AG04449 (cell line): ENCODE measurements at regions of chr5 and their contacts with region 1.

Region 1: GRCh38 chr5:177113566-177114424 is 19.8 kb upstream of the NSD1 start:
- DNase-seq: no peak
- H3K4me3 ChIP-seq: no peak overlapping the region
- CTCF ChIP-seq: peak; percentile 97

Region 2: DNA sequence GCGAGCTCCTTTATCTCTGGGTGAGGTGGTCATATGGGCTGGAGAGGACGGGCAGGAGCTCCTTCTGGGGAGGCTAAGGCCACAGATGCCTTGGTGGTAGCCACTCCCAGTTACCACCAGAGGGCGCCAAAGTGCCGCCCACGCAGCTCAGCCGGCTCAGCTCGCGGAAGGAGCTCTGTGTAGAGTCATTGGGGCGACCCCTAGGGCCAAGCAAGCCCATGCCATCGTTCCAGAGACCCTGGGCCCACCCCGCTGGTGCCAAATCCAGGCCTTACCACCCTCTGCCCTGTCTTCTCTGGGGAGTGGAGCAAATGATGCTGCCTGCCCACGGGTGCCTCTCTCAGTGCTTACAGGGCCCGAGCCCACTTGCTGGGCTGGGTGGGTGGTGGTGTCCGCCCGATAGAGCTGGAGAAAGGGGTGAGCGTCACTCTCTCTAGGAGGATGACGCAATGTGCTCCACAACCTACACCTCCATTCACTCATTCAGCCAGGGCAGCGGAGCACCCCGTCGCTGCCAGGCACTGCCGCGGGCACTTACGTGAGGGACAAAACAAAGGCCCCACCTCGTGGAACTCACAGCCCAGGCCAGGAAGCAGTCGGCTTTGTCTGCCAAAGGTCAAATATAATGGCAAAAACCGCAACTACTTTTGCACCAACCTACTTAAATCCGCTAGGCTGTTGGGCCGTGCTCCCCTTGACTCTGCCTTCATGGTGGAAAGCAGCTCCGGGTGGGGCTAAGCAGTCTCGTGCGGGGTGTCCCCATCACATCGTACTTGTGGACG is 452.7 kb before region 1 on chr5:
- CTCF ChIA-PET with region 1: interaction called, 207 read pairs
- POLR2A ChIA-PET with region 1: no interaction called
- DNase-seq: no peak
- H3K4me3 ChIP-seq: no peak overlapping the region
- CTCF ChIP-seq: peak; percentile 97

Region 3: GRCh38 chr5:176823869-176824412 is 289.9 kb before region 1 on chr5:
- CTCF ChIA-PET with region 1: no interaction called
- POLR2A ChIA-PET with region 1: no interaction called
- DNase-seq: no peak
- H3K4me3 ChIP-seq: no peak overlapping the region
- CTCF ChIP-seq: no peak

Region 4: GRCh38 chr5:177094224-177095087 is 19.3 kb before region 1 on chr5:
- CTCF ChIA-PET with region 1: interaction called, 102 read pairs
- POLR2A ChIA-PET with region 1: no interaction called
- DNase-seq: no peak
- H3K4me3 ChIP-seq: no peak overlapping the region
- CTCF ChIP-seq: no peak

Region 5: DNA sequence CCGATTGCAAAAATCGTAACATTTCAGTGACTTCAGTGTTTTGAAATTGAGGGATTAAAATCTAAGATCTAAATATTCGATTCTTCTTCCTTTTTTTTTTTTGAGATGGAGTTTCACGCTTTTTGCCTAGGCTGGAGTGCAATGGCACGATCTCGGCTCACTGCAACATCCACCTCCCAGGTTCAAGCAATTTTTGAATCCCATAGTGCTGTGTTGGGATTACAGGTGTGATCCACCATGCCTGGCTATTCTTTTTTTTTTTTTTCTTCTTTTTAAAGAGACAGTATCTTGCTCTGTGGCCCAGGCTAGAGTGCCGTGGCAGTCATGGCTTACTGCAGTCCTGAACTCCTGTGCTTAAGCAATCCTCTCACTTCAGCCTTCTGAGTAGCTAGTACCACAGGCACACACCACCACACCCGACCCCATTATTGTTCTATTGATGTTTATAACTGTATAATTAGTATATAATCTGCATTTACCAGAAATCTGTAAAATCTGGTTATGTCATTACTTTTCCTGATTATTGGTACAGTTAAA is 62.4 kb after region 1 on chr5:
- CTCF ChIA-PET with region 1: no interaction called
- POLR2A ChIA-PET with region 1: no interaction called
- DNase-seq: no peak
- H3K4me3 ChIP-seq: no peak overlapping the region
- CTCF ChIP-seq: no peak

Region 6: GRCh38 chr5:177249761-177250526 is 136.1 kb after region 1 on chr5:
- CTCF ChIA-PET with region 1: interaction called, 19 read pairs
- POLR2A ChIA-PET with region 1: no interaction called
- DNase-seq: no peak
- H3K4me3 ChIP-seq: no peak overlapping the region
- CTCF ChIP-seq: no peak

Region 7: DNA sequence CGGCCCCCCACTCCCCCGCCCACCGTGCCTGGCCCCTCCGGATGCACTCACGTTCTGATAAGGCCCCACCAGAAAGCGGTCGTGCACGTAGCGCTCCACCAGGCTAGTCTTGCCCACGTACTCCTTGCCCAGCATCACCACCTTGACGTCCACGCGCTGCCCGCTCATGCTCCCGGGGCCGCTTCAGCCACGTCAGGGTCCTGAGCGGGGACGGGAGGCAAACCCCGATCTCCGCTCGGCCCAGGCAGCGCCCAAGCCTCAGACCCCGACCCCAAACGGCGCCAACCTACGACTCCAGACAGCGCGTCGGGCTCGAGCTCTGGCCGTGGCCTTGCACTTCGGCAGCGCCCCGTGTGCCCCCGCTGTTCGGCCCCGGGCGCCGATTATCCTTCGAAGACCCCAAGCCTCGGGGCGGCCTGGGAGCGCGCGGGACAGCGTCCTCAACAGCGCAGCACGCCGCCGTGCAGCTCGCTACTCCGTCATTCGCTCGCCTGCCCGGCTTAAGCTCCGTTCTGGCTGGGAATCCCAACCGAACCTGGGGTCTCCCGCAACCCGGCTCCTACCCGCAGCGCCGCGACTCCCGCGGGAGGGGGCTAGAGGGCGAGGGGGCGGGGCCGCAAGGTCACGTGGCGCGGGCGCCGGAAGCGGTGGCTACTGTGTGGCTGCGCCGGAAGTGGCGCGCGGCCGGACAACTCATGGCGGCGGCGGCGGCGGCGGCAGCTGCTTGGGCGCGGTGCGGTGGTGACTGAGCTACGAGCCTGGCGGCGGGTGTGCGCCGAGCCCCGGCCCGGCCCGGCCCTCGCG is 189.5 kb after region 1 on chr5 and contains the starts of genes PRELID1 and RAB24:
- CTCF ChIA-PET with region 1: interaction called, 147 read pairs
- POLR2A ChIA-PET with region 1: no interaction called
- DNase-seq: no peak
- H3K4me3 ChIP-seq: peak within 1 kb of the TSS; percentile 96
- CTCF ChIP-seq: peak; percentile 62

Region 8: DNA sequence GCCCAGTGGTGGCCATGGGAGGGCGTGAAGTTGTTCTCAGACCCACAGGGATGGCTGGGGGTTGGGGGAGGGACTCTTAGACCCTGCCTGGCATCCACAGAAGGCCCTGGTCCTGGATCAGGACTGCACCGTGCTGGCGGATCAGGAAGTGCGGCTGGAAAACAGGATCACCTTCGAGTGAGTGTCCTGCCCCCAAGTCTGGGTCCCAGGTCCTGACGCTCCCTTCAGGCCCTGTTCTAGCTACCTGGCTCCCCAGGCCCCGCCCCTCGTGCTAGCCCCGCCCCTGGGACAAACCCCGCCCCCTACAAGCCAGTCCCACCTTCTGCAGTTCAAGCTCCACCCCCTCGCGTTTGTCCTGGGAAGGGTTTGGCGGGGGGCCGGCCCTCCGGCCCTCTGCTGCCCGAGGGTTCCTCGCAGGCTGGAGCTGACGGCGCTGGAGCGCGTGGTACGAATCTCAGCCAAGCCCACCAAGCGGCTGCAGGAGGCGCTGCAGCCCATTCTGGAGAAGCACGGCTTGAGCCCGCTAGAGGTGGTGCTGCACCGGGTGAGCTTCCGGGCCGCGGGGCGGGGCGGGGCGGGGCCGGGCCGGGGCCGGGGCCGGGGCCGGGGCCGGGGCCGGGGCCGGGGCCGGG is 256.8 kb after region 1 on chr5:
- CTCF ChIA-PET with region 1: interaction called, 18 read pairs
- POLR2A ChIA-PET with region 1: no interaction called
- DNase-seq: no peak
- H3K4me3 ChIP-seq: peak overlapping the region; percentile 60
- CTCF ChIP-seq: peak; percentile 76

Region 9: DNA sequence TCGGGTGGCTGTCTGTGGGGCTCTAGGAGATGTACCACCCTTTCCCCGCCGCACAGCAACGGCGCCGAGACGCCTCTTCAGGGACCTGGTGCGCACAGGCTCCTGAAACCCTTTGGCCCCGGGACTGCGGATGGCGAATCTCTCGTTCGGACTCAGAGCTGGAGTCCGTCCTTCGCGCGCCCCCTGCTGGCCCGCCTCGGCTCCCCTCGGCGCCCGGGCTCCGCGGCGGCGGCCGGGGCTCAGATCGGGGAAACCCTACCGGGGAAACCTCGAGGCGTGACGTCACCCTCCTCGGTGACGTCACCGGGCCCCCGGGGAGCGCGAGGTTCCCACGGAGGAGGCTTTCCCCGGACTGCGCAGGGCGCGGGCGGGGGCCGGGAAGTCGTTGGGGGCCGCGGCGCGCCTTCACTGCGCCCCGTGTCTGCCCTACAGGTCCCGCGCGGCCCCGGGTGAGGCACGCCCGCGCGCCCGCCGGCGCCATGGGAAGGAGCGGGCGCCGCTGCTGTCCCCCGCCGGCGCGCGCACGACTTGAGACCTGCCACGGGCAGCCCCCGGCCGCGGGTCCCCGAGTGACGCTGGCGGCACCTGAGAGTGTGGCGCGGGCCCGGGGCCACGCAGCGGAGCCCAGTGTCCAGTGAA is 340.7 kb after region 1 on chr5:
- CTCF ChIA-PET with region 1: interaction called, 21 read pairs
- POLR2A ChIA-PET with region 1: no interaction called
- DNase-seq: no peak
- H3K4me3 ChIP-seq: peak overlapping the region; percentile 47
- CTCF ChIP-seq: peak; percentile 79